Aorta (tissue), 5 donors: ENCODE measurements at regions of chr19 and their contacts with region 1.

Region 1: GRCh38 chr19:53103198-53103944 is at the start of gene ZNF160:
- DNase-seq: peak; percentile 100
- ATAC-seq: peak; percentile 100
- H3K4me3 ChIP-seq: peak within 1 kb of the TSS; percentile 61 to 78
- H3K27ac ChIP-seq: peak within 1 kb of the TSS; percentile 49 to 72
- H3K4me1 ChIP-seq: no peaks in the 10 kb centered on the region
- H3K27me3 ChIP-seq: no peaks in the 10 kb centered on the region
- total RNA-seq, gene ZNF160: 32.5 to 61.0 TPM

Region 2: GRCh38 chr19:53132141-53132991 is 29.0 kb after region 1 on chr19 and contains the start of gene ZNF415:
- intact Hi-C with region 1: loop called in 1 of 2 experiments (anchors 2 kb)
- DNase-seq: peak; percentile 86 to 95
- ATAC-seq: peak; percentile 90
- H3K4me3 ChIP-seq: peak within 1 kb of the TSS; percentile 19 to 54
- H3K27ac ChIP-seq: no peak within 1 kb of the TSS
- H3K4me1 ChIP-seq: no peaks in the 10 kb centered on the region
- H3K27me3 ChIP-seq: no peaks in the 10 kb centered on the region
- total RNA-seq, gene ZNF415: 8.8 to 10.3 TPM